Breast epithelium (tissue), 4 donors: ENCODE measurements at regions of chr1 and their contacts with region 1.

Region 1: GRCh38 chr1:80645621-80646020 is 1155.1 kb upstream of the ADGRL2 start:
- DNase-seq: no peak
- H3K4me3 ChIP-seq: no peak overlapping the region
- H3K27ac ChIP-seq: no peak overlapping the region
- H3K4me1 ChIP-seq: no peaks in the 10 kb centered on the region
- H3K27me3 ChIP-seq: no peaks in the 10 kb centered on the region
- CTCF ChIP-seq: no peak
- POLR2A ChIP-seq: no peak

Region 2: GRCh38 chr1:80696546-80696945 is 50.9 kb after region 1 on chr1:
- intact Hi-C with region 1: loop called (anchors 2 kb)
- DNase-seq: no peak
- H3K4me3 ChIP-seq: no peak overlapping the region
- H3K27ac ChIP-seq: no peak overlapping the region
- H3K4me1 ChIP-seq: no peaks in the 10 kb centered on the region
- H3K27me3 ChIP-seq: no peaks in the 10 kb centered on the region
- CTCF ChIP-seq: no peak
- POLR2A ChIP-seq: no peak